CD4-positive, alpha-beta memory T cell (primary cell): ENCODE measurements at regions of chr5 and their contacts with region 1.

Region 1: GRCh38 chr5:115634343-115635132 is 8.7 kb upstream of the TMED7 start:
- DNase-seq: peak; percentile 72 to 78 (median 75)
- H3K4me3 ChIP-seq: peak overlapping the region in 1 of 2 donors; percentile 10
- H3K4me3 Mint-ChIP-seq: peak overlapping the region; percentile 45 to 87 (median 72)
- H3K27ac ChIP-seq: peak overlapping the region; percentile 26
- H3K27ac Mint-ChIP-seq: peak overlapping the region in 6 of 7 donors; percentile 42 to 85 (median 60)
- H3K4me1 ChIP-seq: peaks cover 7% of the 10 kb centered on the region
- H3K4me1 Mint-ChIP-seq: peaks cover 6 to 7% (median 6%) of the 10 kb centered on the region in 4 donors
- H3K27me3 ChIP-seq: no peaks in the 10 kb centered on the region
- H3K27me3 Mint-ChIP-seq: peaks cover 0 to 2% of the 10 kb centered on the region in 2 donors

Region 2: DNA sequence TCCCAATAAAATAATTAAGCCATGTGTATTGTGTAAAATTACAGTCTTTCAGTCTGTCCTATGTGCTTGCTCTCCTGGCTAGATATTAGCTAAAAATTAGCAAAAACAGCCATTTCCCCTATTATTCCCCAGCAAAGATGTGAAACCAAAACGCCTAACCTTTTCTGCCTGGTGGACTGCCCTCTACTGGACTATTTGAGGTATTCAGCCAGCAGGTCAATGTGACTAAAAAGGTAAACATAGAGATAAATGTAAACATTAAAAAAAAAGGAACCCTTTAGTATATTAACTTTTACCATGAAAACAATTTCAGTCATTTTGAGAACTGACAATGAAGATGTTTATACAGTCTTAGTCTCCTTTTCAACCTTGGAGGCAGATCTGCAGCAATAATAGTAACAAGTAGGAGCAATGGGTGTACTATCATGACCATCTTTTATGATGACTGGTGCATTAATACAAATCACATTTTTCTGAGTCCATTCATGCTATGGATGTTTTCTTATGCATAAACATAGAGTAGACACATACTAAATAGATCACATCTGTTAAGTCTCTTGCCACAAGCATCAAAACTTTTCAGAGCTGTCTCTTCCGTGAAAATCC is 196.7 kb after region 1 on chr5:
- CTCF ChIA-PET with region 1: interaction called, 4 read pairs
- POLR2A ChIA-PET with region 1: no interaction called
- intact Hi-C with region 1: loop called (anchors 1 kb)
- DNase-seq: peak in 4 of 5 donors; percentile 30 to 48 (median 38)
- H3K4me3 ChIP-seq: no peak overlapping the region
- H3K4me3 Mint-ChIP-seq: no peak overlapping the region
- H3K27ac ChIP-seq: no peak overlapping the region
- H3K27ac Mint-ChIP-seq: peak overlapping the region in 5 of 7 donors; percentile 2 to 61 (median 29)
- H3K4me1 ChIP-seq: no peaks in the 10 kb centered on the region
- H3K4me1 Mint-ChIP-seq: peaks cover 5 to 12% (median 10%) of the 10 kb centered on the region in 4 donors
- H3K27me3 ChIP-seq: no peaks in the 10 kb centered on the region
- H3K27me3 Mint-ChIP-seq: no peaks in the 10 kb centered on the region

Region 3: DNA sequence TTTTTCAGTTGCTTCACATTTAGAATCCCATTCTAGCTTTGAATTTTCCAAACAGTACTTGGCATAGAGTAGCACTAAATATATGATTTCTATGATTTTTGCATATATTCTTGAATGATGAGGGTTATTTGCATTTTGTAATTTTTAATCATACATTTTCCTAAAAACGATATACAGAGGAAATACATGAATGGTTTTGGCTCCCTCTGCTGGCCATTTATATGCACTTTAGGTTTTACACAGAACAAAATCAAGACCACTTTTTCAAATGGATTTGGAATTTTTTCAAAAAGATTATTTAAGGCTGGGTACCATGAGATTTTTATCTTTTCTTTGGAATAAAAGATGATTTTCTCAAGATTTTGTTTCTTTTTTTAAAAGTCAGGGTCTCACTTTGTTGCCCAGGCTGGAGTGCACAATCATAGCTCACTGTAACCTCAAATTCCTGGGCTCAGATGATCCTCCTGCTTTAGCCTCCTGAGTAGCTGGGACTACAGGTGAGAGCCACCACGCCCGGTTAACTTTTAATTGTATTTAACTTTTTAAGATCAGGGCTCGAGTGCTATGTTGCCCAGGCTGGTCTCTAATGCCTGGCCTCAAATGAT is 433.6 kb after region 1 on chr5:
- CTCF ChIA-PET with region 1: interaction called, 26 read pairs
- POLR2A ChIA-PET with region 1: no interaction called
- intact Hi-C with region 1: loop called (anchors 1 kb)
- DNase-seq: peak in 4 of 5 donors; percentile 32 to 46 (median 34)
- H3K4me3 ChIP-seq: no peak overlapping the region
- H3K4me3 Mint-ChIP-seq: no peak overlapping the region
- H3K27ac ChIP-seq: no peak overlapping the region
- H3K27ac Mint-ChIP-seq: no peak overlapping the region
- H3K4me1 ChIP-seq: no peaks in the 10 kb centered on the region
- H3K4me1 Mint-ChIP-seq: no peaks in the 10 kb centered on the region
- H3K27me3 ChIP-seq: peaks cover 13% of the 10 kb centered on the region
- H3K27me3 Mint-ChIP-seq: peaks cover 16 to 22% of the 10 kb centered on the region in 2 donors

Region 4: GRCh38 chr5:116947691-116948528 is 1313.4 kb after region 1 on chr5:
- CTCF ChIA-PET with region 1: no interaction called
- POLR2A ChIA-PET with region 1: no interaction called
- intact Hi-C with region 1: loop called (anchors 5 kb)
- DNase-seq: peak; percentile 25 to 43 (median 29)
- H3K4me3 ChIP-seq: no peak overlapping the region
- H3K4me3 Mint-ChIP-seq: no peak overlapping the region
- H3K27ac ChIP-seq: no peak overlapping the region
- H3K27ac Mint-ChIP-seq: no peak overlapping the region
- H3K4me1 ChIP-seq: no peaks in the 10 kb centered on the region
- H3K4me1 Mint-ChIP-seq: peaks cover 0 to 8% (median 4%) of the 10 kb centered on the region in 4 donors
- H3K27me3 ChIP-seq: no peaks in the 10 kb centered on the region
- H3K27me3 Mint-ChIP-seq: no peaks in the 10 kb centered on the region